ENCODE measurements at regions of chr2 and their contacts with region 1.

Region 1: GRCh38 chr2:81403508-81403907 is 1099.0 kb upstream of the LRRTM1 start:
- DNase-seq: no peak
- H3K4me3 ChIP-seq: no peak overlapping the region
- H3K27ac ChIP-seq: no peak overlapping the region
- H3K4me1 ChIP-seq: no peaks in the 10 kb centered on the region
- H3K27me3 ChIP-seq: no peaks in the 10 kb centered on the region
- CTCF ChIP-seq: no peak
- EP300 ChIP-seq: no peak
- POLR2A ChIP-seq: no peak

Region 2: DNA sequence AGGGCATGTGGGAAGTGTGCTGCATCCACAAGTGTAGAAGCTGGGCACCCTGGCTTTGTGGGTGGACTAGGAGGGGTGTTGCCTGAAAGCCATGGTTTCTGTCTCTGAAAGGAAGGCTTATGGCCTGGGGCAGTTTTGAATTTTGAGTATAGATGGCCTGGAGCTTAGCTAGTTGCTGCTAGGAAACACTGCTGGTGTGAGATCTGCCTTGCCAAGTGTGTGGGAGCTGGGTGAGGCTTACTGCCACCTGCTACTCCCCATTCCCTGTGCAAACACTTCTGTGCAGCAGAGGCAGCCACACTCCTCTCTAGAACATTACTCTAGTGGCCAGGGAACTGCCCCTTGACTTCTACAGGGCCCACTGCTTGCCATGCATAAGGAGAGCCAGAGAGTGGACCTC is 267.2 kb before region 1 on chr2:
- in situ Hi-C with region 1: no loop called
- intact Hi-C with region 1: no loop called
- DNase-seq: no peak
- H3K4me3 ChIP-seq: no peak overlapping the region
- H3K27ac ChIP-seq: no peak overlapping the region
- H3K4me1 ChIP-seq: no peaks in the 10 kb centered on the region
- H3K27me3 ChIP-seq: no peaks in the 10 kb centered on the region
- CTCF ChIP-seq: no peak
- EP300 ChIP-seq: no peak
- POLR2A ChIP-seq: no peak

Region 3: DNA sequence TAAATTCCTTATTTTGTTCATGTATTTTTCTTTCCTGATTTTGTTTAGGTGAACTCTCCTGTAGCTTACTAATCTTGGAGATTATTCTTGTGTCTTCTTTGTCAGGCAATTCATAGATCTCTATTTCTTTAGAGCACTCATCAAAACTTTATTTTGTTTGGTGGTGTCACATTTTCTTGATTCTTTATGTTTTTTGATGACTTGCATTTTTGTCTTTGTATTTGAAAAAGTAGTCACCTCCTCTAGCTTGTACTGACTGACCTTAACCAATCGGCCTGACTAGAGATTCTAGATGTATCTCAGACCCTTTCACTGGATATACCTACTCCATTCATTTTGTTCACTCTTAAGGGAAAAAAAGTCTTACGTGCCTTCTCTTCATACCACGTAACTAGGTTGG is 112.7 kb before region 1 on chr2:
- in situ Hi-C with region 1: no loop called
- intact Hi-C with region 1: no loop called
- DNase-seq: no peak
- H3K4me3 ChIP-seq: no peak overlapping the region
- H3K27ac ChIP-seq: no peak overlapping the region
- H3K4me1 ChIP-seq: no peaks in the 10 kb centered on the region
- H3K27me3 ChIP-seq: no peaks in the 10 kb centered on the region
- CTCF ChIP-seq: no peak
- EP300 ChIP-seq: no peak
- POLR2A ChIP-seq: no peak

Region 4: DNA sequence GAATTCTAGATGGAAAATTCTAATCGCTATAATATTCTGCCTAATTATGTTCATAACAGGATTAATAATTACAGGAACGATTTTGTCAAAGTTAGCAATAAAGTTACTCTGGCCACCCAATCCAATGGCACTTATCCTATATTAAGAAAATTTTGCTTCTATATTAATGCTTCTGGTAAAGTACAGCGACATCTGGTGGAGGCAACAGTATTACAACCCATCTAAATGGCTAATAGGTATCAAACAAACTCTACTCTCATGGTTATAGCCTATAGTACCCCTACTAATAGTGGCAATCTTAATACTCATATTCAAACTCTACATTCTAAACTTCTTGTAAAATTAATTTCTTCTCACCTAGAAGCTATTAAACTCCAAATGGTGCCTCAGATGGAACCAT is 14.3 kb before region 1 on chr2:
- in situ Hi-C with region 1: no loop called
- intact Hi-C with region 1: loop called (anchors 1 kb)
- DNase-seq: no peak
- H3K4me3 ChIP-seq: no peak overlapping the region
- H3K27ac ChIP-seq: no peak overlapping the region
- H3K4me1 ChIP-seq: no peaks in the 10 kb centered on the region
- H3K27me3 ChIP-seq: no peaks in the 10 kb centered on the region
- CTCF ChIP-seq: no peak
- EP300 ChIP-seq: no peak
- POLR2A ChIP-seq: no peak